ENCODE measurements at regions of chr1 and their contacts with region 1.

Region 1: DNA sequence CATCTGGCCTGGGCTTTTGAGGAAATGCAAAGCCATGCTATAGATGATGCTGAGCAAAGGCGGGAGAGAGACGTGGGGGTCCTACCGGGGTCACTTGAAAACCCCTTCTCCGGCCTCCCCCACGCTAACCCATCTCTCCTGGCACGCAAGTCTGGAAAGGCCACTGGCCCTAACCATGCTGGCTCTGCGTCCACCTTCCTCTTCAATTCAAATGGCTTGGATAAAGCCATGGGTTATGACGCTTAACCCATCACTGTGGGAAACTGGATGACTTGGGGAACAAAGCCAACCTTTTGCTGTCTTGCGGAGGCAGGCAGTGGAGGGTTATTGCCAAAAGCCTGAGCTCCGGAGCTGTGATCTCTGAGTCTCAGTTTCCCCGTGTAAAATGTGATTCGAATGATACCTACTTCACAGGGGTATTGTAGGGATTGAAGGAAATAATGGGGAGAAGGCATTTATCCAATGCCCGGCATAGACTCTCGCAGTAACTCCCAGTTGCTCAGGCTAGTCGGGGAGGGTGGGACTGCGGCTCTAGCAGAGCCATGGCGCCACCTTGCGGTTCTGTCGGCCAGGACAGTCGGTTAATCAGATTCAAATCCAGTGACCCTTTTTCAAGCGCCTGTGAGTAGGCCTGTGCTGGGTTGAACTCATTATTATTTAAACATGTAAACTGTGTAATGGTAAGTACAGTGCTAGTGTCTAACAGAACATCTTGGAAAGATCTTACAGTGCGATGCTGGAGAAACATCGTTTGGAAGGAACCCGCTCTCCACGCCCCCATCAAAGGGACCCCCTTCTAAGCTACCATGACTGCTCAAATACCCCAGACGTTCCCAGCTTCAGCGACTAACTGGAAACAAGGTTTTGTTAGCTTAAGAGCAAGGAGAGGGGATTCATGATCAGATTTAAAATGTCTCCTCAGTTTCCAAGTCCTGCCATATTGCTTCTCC is 20.3 kb downstream of the NEK2 start:
- DNase-seq: peak; percentile 87
- H3K4me3 Mint-ChIP-seq: no peak overlapping the region
- H3K27ac Mint-ChIP-seq: no peak overlapping the region
- H3K4me1 Mint-ChIP-seq: no peaks in the 10 kb centered on the region
- H3K27me3 Mint-ChIP-seq: no peaks in the 10 kb centered on the region

Region 2: GRCh38 chr1:211469938-211470529 is 185.1 kb before region 1 on chr1:
- CTCF ChIA-PET with region 1: interaction called, 15 read pairs
- POLR2A ChIA-PET with region 1: no interaction called
- intact Hi-C with region 1: no loop called
- DNase-seq: peak; percentile 57
- H3K4me3 Mint-ChIP-seq: no peak overlapping the region
- H3K27ac Mint-ChIP-seq: no peak overlapping the region
- H3K4me1 Mint-ChIP-seq: no peaks in the 10 kb centered on the region
- H3K27me3 Mint-ChIP-seq: no peaks in the 10 kb centered on the region

Region 3: GRCh38 chr1:211564084-211564483 is 91.0 kb before region 1 on chr1:
- CTCF ChIA-PET with region 1: no interaction called
- POLR2A ChIA-PET with region 1: no interaction called
- intact Hi-C with region 1: no loop called
- DNase-seq: no peak
- H3K4me3 Mint-ChIP-seq: no peak overlapping the region
- H3K27ac Mint-ChIP-seq: no peak overlapping the region
- H3K4me1 Mint-ChIP-seq: peaks cover 13% of the 10 kb centered on the region
- H3K27me3 Mint-ChIP-seq: peaks cover 1% of the 10 kb centered on the region